Gastrocnemius medialis (tissue), 4 donors: ENCODE measurements at regions of chr5 and their contacts with region 1.

Region 1: GRCh38 chr5:124748687-124749594 is 2.5 kb upstream of the ZNF608 start:
- DNase-seq: peak; percentile 86 to 92
- ATAC-seq: peak; percentile 76 to 81
- H3K4me3 ChIP-seq: peak overlapping the region; percentile 63 to 81 (median 71)
- H3K27ac ChIP-seq: peak overlapping the region; percentile 87 to 96 (median 92)
- H3K4me1 ChIP-seq: peaks cover 17 to 18% of the 10 kb centered on the region in 2 donors
- H3K27me3 ChIP-seq: no peaks in the 10 kb centered on the region
- CTCF ChIP-seq: no peak
- POLR2A ChIP-seq: peak; percentile 69 to 91

Region 2: GRCh38 chr5:124365361-124365801 is 383.6 kb before region 1 on chr5:
- in situ Hi-C with region 1: no loop called
- intact Hi-C with region 1: no loop called
- DNase-seq: no peak
- ATAC-seq: no peak
- H3K4me3 ChIP-seq: no peak overlapping the region
- H3K27ac ChIP-seq: no peak overlapping the region
- H3K4me1 ChIP-seq: no peaks in the 10 kb centered on the region
- H3K27me3 ChIP-seq: no peaks in the 10 kb centered on the region
- CTCF ChIP-seq: no peak
- POLR2A ChIP-seq: no peak

Region 3: DNA sequence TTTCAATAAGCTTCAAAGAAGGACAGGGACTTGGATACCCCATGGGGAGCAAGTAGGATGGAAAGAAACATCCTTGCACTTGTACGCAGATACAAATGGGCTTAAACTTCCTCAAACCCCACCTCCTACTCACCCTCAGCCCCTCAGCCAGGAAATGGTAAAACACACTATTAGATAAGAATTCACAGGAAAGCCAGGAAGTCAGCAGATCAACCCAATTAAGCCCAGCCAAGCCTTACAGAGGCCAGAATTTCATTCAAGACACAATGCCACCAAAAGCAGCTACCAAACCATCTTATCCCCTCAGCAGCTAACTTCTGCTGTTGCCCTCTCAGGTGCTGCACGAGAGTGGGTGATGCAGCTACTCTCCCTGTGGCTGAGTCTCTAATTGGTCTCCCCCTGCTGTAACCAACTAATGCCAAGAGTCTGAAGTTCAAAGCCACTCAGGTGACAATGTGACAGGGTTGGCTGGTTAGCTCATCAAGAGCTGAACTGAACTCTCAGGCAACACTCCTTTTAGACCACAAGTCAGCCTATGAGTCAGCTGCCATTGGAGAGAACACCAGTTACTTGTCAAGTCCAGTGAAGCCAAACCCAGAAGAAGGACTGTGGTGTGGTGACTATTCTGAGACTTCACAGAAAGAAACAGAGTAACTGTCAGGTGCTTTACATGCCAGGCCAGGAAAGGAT is 204.4 kb before region 1 on chr5:
- in situ Hi-C with region 1: loop called in 1 of 4 experiments (anchors 25 kb)
- intact Hi-C with region 1: no loop called
- DNase-seq: peak; percentile 53 to 55
- ATAC-seq: peak; percentile 92 to 97
- H3K4me3 ChIP-seq: no peak overlapping the region
- H3K27ac ChIP-seq: peak overlapping the region in 2 of 4 donors; percentile 33 to 57
- H3K4me1 ChIP-seq: no peaks in the 10 kb centered on the region
- H3K27me3 ChIP-seq: no peaks in the 10 kb centered on the region
- CTCF ChIP-seq: no peak
- POLR2A ChIP-seq: peak in 1 of 2 donors; percentile 17

Region 4: GRCh38 chr5:124655922-124656511 is 92.9 kb before region 1 on chr5:
- in situ Hi-C with region 1: loop called in 1 of 4 experiments (anchors 10 kb)
- intact Hi-C with region 1: loop called (anchors 2 kb)
- DNase-seq: peak; percentile 28 to 31
- ATAC-seq: peak; percentile 69 to 80
- H3K4me3 ChIP-seq: peak overlapping the region; percentile 22 to 46 (median 36)
- H3K27ac ChIP-seq: peak overlapping the region; percentile 74 to 86 (median 82)
- H3K4me1 ChIP-seq: peaks cover 56 to 72% of the 10 kb centered on the region in 2 donors
- H3K27me3 ChIP-seq: no peaks in the 10 kb centered on the region
- CTCF ChIP-seq: no peak
- POLR2A ChIP-seq: no peak

Region 5: DNA sequence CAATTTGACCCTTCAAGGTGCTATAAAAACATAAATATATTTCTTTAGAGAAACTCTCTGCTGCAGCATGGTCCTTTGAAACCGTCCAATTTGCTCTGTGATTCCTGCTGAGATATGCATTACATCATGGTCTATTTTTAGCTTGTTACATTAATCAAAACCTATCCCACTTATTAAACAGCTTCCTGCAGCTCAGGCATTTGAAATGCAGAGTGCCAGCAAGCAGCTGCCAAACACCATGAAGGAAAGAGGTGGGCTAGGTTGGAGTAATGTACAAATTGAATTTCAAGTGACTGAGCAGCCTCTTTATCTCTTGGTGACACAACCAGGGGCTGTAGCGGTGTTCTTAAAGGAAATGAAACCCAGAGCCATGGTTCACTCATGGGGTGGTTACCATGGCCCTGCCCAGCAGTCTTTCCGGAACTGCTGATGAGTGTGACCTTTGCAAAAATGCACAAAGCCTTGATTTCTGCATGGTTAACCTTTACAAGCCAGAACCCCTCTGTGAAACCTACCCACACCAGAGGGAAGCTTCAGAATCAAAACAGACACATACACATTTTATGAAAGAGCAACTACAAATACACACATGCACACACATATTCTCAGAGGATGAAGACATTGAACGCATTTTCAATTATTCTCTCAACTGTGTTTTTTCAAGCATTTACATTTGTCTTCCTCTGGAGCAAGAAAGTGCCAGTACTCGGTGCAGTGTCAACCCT is 153.3 kb after region 1 on chr5:
- in situ Hi-C with region 1: loop called in 3 of 4 experiments (anchors 5 to 10 kb)
- intact Hi-C with region 1: loop called (anchors 2 kb)
- DNase-seq: no peak
- ATAC-seq: no peak
- H3K4me3 ChIP-seq: no peak overlapping the region
- H3K27ac ChIP-seq: peak overlapping the region in 1 of 4 donors; percentile 8
- H3K4me1 ChIP-seq: peaks cover 34 to 38% of the 10 kb centered on the region in 2 donors
- H3K27me3 ChIP-seq: no peaks in the 10 kb centered on the region
- CTCF ChIP-seq: no peak
- POLR2A ChIP-seq: no peak

Region 6: GRCh38 chr5:125043781-125044391 is 294.9 kb after region 1 on chr5:
- in situ Hi-C with region 1: no loop called
- intact Hi-C with region 1: loop called (anchors 5 kb)
- DNase-seq: peak; percentile 6 to 43
- ATAC-seq: peak; percentile 33 to 74
- H3K4me3 ChIP-seq: no peak overlapping the region
- H3K27ac ChIP-seq: no peak overlapping the region
- H3K4me1 ChIP-seq: peaks cover 20 to 29% of the 10 kb centered on the region in 2 donors
- H3K27me3 ChIP-seq: no peaks in the 10 kb centered on the region
- CTCF ChIP-seq: no peak
- POLR2A ChIP-seq: no peak

Region 7: GRCh38 chr5:125484742-125485641 is 736.1 kb after region 1 on chr5:
- in situ Hi-C with region 1: loop called in 1 of 4 experiments (anchors 25 kb)
- intact Hi-C with region 1: no loop called
- DNase-seq: peak; percentile 84 to 86
- ATAC-seq: peak; percentile 95 to 96
- H3K4me3 ChIP-seq: peak overlapping the region in 3 of 4 donors; percentile 15 to 27 (median 21)
- H3K27ac ChIP-seq: peak overlapping the region; percentile 67 to 94 (median 88)
- H3K4me1 ChIP-seq: peaks cover 7 to 30% of the 10 kb centered on the region in 2 donors
- H3K27me3 ChIP-seq: no peaks in the 10 kb centered on the region
- CTCF ChIP-seq: no peak
- POLR2A ChIP-seq: no peak